Sigmoid colon (tissue), 7 donors: ENCODE measurements at regions of chr1 and their contacts with region 1.

Region 1: GRCh38 chr1:208159555-208160258 is 84.5 kb downstream of the PLXNA2 start:
- DNase-seq: peak; percentile 75
- H3K4me3 ChIP-seq: no peak overlapping the region
- H3K27ac ChIP-seq: peak overlapping the region; percentile 76 to 82 (median 80)
- H3K4me1 ChIP-seq: peaks cover 0 to 92% (median 72%) of the 10 kb centered on the region in 4 donors
- H3K27me3 ChIP-seq: no peaks in the 10 kb centered on the region
- CTCF ChIP-seq: no peak
- EP300 ChIP-seq: no peak
- POLR2A ChIP-seq: no peak

Region 2: DNA sequence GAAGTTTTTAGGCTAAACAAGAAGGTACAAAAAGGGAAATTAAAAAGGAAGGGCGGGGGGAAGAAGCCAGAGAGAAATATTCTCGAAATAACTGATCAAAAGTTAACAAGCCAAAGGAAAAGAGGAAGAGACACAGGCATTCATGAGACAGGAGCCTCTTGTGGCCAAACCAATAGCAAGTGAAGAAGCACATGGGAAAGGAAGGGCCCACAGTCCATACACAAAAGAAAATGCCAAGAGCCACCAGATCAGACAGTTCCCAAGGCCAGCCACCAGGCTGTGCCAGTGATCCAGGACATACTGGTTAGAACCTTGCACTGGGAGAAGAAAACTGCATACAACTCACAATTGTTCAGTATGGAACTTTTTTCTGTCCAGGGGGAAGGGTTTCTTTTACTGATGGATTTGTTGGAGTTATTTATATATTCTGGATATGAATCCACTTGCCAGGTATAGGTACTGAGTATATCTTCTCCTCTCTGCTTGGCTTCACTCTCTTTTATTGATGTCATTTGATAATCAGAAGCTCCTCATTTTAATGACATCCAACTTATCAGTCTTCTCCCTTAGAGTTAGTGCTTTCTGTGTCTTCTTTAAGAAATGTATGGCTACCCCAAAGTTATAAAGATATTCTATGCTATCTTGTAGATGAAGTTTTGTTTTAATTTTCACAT is 331.1 kb before region 1 on chr1:
- intact Hi-C with region 1: loop called (anchors 5 kb)
- DNase-seq: peak; percentile 91
- H3K4me3 ChIP-seq: no peak overlapping the region
- H3K27ac ChIP-seq: peak overlapping the region; percentile 91 to 99 (median 94)
- H3K4me1 ChIP-seq: peaks cover 0 to 94% (median 88%) of the 10 kb centered on the region in 4 donors
- H3K27me3 ChIP-seq: no peaks in the 10 kb centered on the region
- CTCF ChIP-seq: peak; percentile 86 to 97 (median 92)
- EP300 ChIP-seq: no peak
- POLR2A ChIP-seq: no peak

Region 3: DNA sequence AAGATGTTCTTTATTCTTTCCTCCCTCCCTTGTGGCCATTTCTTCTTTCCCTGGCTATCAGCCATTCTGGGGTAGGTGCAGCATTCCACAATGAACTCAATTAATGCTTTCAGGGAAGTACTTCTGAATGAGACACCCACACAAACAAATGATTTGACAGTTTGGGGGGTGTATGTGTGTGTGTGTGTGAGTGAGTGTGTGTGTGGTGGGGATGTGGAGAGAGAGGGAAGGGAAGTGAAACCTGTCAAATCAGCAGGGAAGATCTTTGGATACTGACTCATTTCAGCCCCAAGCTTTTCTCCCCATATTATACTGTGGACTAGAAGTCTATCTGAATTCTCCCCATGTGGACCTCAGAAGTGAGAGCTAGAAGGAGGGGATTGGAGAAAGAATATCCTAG is 93.8 kb before region 1 on chr1:
- intact Hi-C with region 1: no loop called
- DNase-seq: no peak
- H3K4me3 ChIP-seq: no peak overlapping the region
- H3K27ac ChIP-seq: no peak overlapping the region
- H3K4me1 ChIP-seq: no peaks in the 10 kb centered on the region
- H3K27me3 ChIP-seq: no peaks in the 10 kb centered on the region
- CTCF ChIP-seq: no peak
- EP300 ChIP-seq: no peak
- POLR2A ChIP-seq: no peak

Region 4: GRCh38 chr1:208118841-208119606 is 40.7 kb before region 1 on chr1:
- intact Hi-C with region 1: no loop called
- DNase-seq: no peak
- H3K4me3 ChIP-seq: no peak overlapping the region
- H3K27ac ChIP-seq: no peak overlapping the region
- H3K4me1 ChIP-seq: no peaks in the 10 kb centered on the region
- H3K27me3 ChIP-seq: no peaks in the 10 kb centered on the region
- CTCF ChIP-seq: no peak
- EP300 ChIP-seq: no peak
- POLR2A ChIP-seq: no peak

Region 5: GRCh38 chr1:208141610-208142192 is 18.0 kb before region 1 on chr1:
- intact Hi-C with region 1: loop called (anchors 2 kb)
- DNase-seq: peak; percentile 92
- H3K4me3 ChIP-seq: no peak overlapping the region
- H3K27ac ChIP-seq: peak overlapping the region; percentile 45 to 85 (median 76)
- H3K4me1 ChIP-seq: peaks cover 0 to 49% (median 40%) of the 10 kb centered on the region in 4 donors
- H3K27me3 ChIP-seq: no peaks in the 10 kb centered on the region
- CTCF ChIP-seq: no peak
- EP300 ChIP-seq: peak in 2 of 4 donors; percentile 9 to 42
- POLR2A ChIP-seq: no peak

Region 6: DNA sequence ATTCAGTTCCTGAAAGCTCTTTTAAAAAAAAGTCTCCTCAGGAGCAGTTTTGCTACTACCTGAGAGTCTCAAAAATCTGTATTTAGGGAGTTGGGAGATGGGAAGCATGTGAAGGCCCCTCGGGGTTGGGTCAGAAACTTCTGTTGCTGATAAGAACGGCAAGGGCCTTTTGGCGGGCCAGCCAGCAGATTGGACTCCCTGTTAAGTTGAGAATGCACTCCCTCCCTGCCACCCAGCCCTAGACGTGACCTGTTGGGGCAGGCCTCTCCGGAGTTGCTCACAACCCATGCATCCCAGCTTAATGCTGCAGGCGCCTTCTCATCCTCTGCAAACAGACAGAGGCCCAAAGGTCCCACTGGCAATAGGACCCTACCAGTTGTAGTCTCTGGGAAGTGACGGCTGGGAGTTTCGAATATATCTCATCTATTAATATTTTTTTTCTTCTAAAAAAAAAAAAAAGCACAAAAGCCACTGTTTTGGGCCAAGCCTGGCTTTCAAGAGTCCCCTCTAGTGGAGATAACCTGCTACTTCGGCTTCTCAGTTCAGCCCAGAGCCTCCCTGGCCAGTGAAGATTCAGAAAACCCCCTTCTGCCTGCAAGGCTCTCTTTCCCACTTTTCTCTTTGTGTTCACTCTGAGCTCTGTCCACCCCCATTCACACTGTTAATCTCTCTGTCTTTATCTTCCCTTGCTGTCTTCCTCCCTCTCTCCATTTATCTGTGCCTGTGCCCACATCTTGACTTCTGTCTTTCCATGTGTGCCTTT is 79.2 kb after region 1 on chr1:
- intact Hi-C with region 1: no loop called
- DNase-seq: no peak
- H3K4me3 ChIP-seq: no peak overlapping the region
- H3K27ac ChIP-seq: peak overlapping the region; percentile 30 to 46 (median 42)
- H3K4me1 ChIP-seq: peaks cover 0 to 79% (median 73%) of the 10 kb centered on the region in 4 donors
- H3K27me3 ChIP-seq: no peaks in the 10 kb centered on the region
- CTCF ChIP-seq: peak; percentile 40 to 67 (median 46)
- EP300 ChIP-seq: no peak
- POLR2A ChIP-seq: no peak